ENCODE measurements at regions of chr12 and their contacts with region 1.

Region 1: GRCh38 chr12:113310489-113310888 is 24.4 kb downstream of the SLC8B1 start:
- DNase-seq: no peak
- ATAC-seq: no peak
- H3K4me3 ChIP-seq: no peak overlapping the region
- H3K27ac ChIP-seq: no peak overlapping the region
- H3K4me1 ChIP-seq: no peaks in the 10 kb centered on the region
- H3K27me3 ChIP-seq: no peaks in the 10 kb centered on the region

Region 2: GRCh38 chr12:113214938-113215400 is 95.5 kb before region 1 on chr12:
- intact Hi-C with region 1: no loop called
- DNase-seq: peak; percentile 80 to 82
- ATAC-seq: peak; percentile 91
- H3K4me3 ChIP-seq: no peak overlapping the region
- H3K27ac ChIP-seq: peak overlapping the region in 1 of 2 donors; percentile 46
- H3K4me1 ChIP-seq: peaks cover 2 to 11% of the 10 kb centered on the region in 2 donors
- H3K27me3 ChIP-seq: no peaks in the 10 kb centered on the region

Region 3: DNA sequence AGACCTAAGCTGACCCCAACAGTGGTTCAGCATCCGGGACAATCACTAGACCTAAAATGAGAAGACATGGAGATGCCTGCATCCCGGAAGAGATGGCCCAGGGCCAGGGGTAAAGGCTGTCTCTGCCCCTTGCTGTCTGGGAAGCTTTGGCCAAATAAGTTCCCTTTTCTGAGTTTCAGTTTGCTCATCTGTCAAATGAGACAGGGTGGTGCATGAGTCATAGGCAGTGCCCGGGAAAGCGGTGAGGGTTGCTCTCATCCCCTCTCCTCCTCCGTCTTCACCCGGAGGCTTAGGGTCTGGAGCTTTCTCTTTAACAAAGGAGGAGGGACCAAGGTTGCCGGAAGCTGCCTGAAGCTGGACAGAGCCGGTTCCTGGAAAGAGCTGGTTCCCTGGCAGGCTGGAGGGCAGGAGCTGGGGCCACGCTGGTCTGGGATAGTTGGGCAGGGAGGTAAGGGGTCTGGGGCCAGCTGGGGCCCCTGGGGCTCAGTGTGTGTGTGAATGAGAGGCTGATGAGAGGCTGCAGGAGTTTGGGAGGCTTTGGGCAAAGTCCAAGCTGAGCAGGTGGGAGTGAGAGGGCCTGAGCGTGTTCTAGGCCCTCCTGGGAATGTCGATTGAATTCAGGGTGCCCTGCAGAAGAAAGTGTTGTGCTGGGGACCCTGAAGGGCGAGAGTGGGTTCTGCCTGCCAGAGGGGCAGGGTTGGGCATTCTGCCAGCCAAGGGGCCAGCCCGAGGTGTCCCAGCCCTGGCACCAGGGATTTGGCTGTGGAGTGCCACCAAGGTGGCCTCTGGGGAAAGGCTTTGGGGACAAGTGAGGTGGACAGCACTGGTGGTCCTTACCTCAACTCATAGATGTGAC is 111.8 kb after region 1 on chr12 and contains the start of gene SDSL:
- intact Hi-C with region 1: loop called (anchors 5 to 10 kb)
- DNase-seq: peak; percentile 82 to 90
- ATAC-seq: peak; percentile 75
- H3K4me3 ChIP-seq: peak within 1 kb of the TSS; percentile 50 to 52
- H3K27ac ChIP-seq: no peak within 1 kb of the TSS
- H3K4me1 ChIP-seq: no peaks in the 10 kb centered on the region
- H3K27me3 ChIP-seq: no peaks in the 10 kb centered on the region
- total RNA-seq, gene SDSL: 3.8 to 4.5 TPM